Gastrocnemius medialis (tissue), 4 donors: ENCODE measurements at regions of chr4 and their contacts with region 1.

Region 1: DNA sequence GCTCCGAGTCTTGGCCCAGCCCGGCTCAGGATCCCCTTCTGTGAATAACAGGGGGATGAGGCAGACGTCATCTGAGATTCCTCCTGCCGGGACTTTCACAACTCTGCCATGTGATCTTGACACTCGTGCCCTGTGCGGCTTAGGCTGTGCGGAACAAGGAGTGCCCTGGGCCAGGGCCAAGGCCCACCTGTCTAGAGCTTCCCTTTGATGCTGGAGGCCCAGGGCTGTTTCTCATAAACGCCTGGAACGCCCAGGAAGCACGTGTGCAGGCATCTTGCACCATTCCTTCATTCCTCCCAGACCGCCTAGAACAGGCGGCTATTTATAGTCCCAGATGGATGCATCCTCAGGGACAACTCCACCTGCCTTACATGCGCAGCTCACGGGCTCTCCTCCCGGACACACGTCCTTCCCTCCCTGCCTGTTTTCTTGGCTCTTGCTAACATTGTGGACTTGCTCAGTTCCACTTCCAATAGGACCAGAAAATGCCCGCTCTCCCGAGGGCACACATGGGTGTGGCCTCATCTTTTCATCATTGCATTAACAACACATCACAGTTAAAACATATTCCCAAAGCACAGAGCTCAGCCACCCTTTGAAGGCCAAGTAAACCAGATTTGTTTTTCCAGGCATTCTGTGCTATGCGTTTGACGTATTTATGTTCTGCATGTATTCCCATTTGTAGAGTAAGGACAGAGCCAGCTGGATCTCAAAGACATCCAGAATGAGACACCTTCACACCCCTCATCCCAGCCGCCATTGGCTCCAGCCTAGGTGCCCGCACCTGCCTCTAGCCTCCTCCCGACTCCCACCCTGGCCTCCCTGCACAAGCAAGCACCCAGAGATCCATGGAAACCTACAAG is 57.2 kb downstream of the ABLIM2 start:
- DNase-seq: peak; percentile 99 to 100
- ATAC-seq: peak; percentile 57 to 62
- H3K4me3 ChIP-seq: no peak overlapping the region
- H3K27ac ChIP-seq: peak overlapping the region; percentile 93 to 100 (median 98)
- H3K4me1 ChIP-seq: peaks cover 69 to 74% of the 10 kb centered on the region in 2 donors
- H3K27me3 ChIP-seq: no peaks in the 10 kb centered on the region
- CTCF ChIP-seq: peak in 2 of 5 experiments; percentile 12 to 64
- POLR2A ChIP-seq: peak in 1 of 2 donors; percentile 69

Region 2: DNA sequence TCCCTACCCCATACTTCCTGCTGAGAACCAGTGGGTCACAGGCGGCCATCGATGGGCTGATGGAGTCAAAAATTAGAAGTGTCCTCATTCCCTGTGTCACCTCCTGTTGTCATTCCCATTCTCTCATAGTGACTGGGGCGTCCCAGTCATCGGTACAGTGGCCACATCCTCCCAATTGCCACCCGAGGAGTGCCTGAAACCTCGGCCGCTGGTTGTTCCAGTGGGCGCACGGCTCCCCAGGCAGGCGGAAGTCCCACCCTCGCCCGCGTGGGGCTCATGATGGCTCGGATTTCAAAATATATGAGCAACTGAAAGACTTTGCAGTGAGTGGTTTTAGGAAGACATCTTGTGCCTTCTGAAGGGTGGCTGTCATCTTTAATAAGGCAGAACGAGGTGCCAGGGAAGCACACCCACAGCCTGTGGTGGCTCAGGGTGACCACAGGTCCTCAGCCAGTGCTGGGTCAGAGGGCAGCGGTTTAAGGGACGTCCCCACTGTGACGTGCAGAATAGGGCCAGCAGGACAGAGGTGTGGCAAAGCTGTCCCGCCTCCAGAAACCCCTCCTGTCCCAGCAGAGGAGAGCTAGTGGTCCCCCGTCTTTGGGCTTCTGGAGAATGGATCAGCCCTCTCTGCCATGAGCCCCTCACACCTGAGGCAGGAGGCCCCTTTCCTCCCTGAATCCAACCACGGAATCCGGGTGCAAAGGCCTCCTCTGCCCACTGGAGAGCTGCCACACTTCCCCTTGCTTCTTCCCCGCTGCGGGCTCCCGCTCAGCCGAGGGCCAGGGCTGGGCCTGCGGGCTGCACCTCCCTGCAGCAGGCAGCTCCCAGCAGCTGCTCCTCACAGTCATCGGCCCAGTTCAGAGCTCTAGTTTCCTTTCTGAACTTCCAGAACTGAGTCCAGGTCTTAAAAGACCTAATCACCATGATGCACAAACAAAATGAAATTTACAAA is 33.2 kb before region 1 on chr4:
- in situ Hi-C with region 1: no loop called
- intact Hi-C with region 1: loop called (anchors 2 kb)
- DNase-seq: peak; percentile 45 to 78
- ATAC-seq: peak; percentile 59 to 63
- H3K4me3 ChIP-seq: no peak overlapping the region
- H3K27ac ChIP-seq: peak overlapping the region; percentile 89 to 95 (median 92)
- H3K4me1 ChIP-seq: peaks cover 29 to 37% of the 10 kb centered on the region in 2 donors
- H3K27me3 ChIP-seq: no peaks in the 10 kb centered on the region
- CTCF ChIP-seq: no peak
- POLR2A ChIP-seq: peak; percentile 23 to 56

Region 3: GRCh38 chr4:8113611-8114377 is 12.3 kb after region 1 on chr4:
- in situ Hi-C with region 1: no loop called
- intact Hi-C with region 1: loop called (anchors 1 kb)
- DNase-seq: peak; percentile 79 to 91
- ATAC-seq: peak; percentile 52 to 57
- H3K4me3 ChIP-seq: peak overlapping the region in 3 of 4 donors; percentile 20 to 40 (median 32)
- H3K27ac ChIP-seq: peak overlapping the region; percentile 93 to 100 (median 98)
- H3K4me1 ChIP-seq: peaks cover 89 to 91% of the 10 kb centered on the region in 2 donors
- H3K27me3 ChIP-seq: no peaks in the 10 kb centered on the region
- CTCF ChIP-seq: no peak
- POLR2A ChIP-seq: peak; percentile 60 to 67

Region 4: GRCh38 chr4:8128100-8128856 is 26.8 kb after region 1 on chr4:
- in situ Hi-C with region 1: no loop called
- intact Hi-C with region 1: no loop called
- DNase-seq: peak in 1 of 2 donors; percentile 61
- ATAC-seq: peak; percentile 4 to 13
- H3K4me3 ChIP-seq: peak overlapping the region in 3 of 4 donors; percentile 32 to 78 (median 67)
- H3K27ac ChIP-seq: peak overlapping the region; percentile 93 to 100 (median 98)
- H3K4me1 ChIP-seq: peaks cover 36 to 43% of the 10 kb centered on the region in 2 donors
- H3K27me3 ChIP-seq: no peaks in the 10 kb centered on the region
- CTCF ChIP-seq: no peak
- POLR2A ChIP-seq: peak in 1 of 2 donors; percentile 6

Region 5: DNA sequence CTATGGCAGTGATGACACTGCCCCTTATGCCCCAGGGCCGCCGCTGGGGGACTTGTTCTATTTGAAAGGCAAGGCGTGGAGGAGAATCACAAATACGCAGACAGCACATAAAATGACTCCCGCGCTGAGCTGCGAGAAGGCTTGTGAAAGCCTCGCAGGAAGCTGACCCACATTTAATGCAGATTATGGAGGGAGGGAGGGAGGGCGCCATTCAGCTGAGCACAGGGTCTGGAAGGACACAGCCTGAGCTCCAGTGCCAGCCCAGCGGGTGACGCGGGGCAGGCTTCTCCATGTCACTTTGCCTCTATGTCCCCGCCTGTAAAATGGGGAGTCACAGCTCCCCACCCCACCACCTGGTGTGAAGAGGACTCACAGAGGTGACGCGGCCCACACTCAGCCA is 42.9 kb after region 1 on chr4:
- in situ Hi-C with region 1: no loop called
- intact Hi-C with region 1: loop called (anchors 1 kb)
- DNase-seq: peak; percentile 75 to 89
- ATAC-seq: peak; percentile 40 to 58
- H3K4me3 ChIP-seq: peak overlapping the region; percentile 2 to 30 (median 21)
- H3K27ac ChIP-seq: peak overlapping the region; percentile 94 to 99 (median 96)
- H3K4me1 ChIP-seq: peaks cover 52 to 63% of the 10 kb centered on the region in 2 donors
- H3K27me3 ChIP-seq: no peaks in the 10 kb centered on the region
- CTCF ChIP-seq: peak in 1 of 5 experiments; percentile 23
- POLR2A ChIP-seq: peak; percentile 61 to 78

Region 6: DNA sequence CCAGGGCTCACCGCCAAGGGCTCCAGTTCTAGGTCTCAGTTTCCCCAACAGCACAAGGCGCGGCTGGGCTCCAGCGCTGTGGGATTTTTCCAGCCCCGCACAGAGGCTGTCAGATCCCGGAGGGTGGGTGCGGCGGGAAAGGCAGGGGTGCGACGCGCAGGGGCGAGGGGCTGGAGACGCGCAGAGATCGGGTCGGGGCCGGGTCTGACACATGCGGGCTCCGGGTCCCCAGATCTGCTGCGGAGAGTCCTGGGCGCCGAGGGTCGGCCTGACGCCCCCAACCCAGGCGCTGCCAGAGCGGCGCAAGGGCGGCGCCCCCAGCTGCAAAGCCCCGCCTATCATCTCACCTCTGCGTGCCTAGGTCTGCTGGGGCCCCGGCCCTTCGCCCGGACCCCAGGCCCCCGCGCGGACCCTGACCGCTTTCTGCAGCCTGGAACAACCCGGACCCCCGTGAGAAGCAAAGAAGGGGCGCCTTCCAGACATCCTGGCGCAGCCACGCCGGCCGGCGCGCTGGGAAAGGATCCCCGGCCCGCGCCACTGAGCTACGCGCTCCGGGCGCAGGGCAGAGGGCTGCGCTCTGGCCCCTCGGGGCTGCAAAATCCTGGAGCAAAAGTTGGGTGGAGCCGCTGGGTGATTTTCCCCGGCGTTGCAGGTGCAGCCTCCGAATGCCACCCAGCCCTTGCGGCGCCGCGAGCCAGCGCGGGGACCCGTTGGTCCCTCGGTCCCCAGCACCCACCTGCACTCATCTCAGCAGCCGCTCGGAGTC is 56.7 kb after region 1 on chr4:
- in situ Hi-C with region 1: loop called in 3 of 4 experiments (anchors 10 kb)
- intact Hi-C with region 1: loop called (anchors 2 kb)
- DNase-seq: no peak
- ATAC-seq: peak; percentile 12 to 14
- H3K4me3 ChIP-seq: peak overlapping the region; percentile 80 to 93 (median 90)
- H3K27ac ChIP-seq: peak overlapping the region; percentile 89 to 99 (median 92)
- H3K4me1 ChIP-seq: peaks cover 44 to 49% of the 10 kb centered on the region in 2 donors
- H3K27me3 ChIP-seq: no peaks in the 10 kb centered on the region
- CTCF ChIP-seq: no peak
- POLR2A ChIP-seq: no peak

Region 7: GRCh38 chr4:8168232-8168631 is 66.8 kb after region 1 on chr4:
- in situ Hi-C with region 1: loop called (anchors 5 to 10 kb)
- intact Hi-C with region 1: loop called (anchors 1 kb)
- DNase-seq: no peak
- ATAC-seq: no peak
- H3K4me3 ChIP-seq: no peak overlapping the region
- H3K27ac ChIP-seq: peak overlapping the region; percentile 86 to 99 (median 97)
- H3K4me1 ChIP-seq: peaks cover 47 to 50% of the 10 kb centered on the region in 2 donors
- H3K27me3 ChIP-seq: no peaks in the 10 kb centered on the region
- CTCF ChIP-seq: peak in 3 of 5 experiments; percentile 47 to 79 (median 79)
- POLR2A ChIP-seq: no peak

Region 8: DNA sequence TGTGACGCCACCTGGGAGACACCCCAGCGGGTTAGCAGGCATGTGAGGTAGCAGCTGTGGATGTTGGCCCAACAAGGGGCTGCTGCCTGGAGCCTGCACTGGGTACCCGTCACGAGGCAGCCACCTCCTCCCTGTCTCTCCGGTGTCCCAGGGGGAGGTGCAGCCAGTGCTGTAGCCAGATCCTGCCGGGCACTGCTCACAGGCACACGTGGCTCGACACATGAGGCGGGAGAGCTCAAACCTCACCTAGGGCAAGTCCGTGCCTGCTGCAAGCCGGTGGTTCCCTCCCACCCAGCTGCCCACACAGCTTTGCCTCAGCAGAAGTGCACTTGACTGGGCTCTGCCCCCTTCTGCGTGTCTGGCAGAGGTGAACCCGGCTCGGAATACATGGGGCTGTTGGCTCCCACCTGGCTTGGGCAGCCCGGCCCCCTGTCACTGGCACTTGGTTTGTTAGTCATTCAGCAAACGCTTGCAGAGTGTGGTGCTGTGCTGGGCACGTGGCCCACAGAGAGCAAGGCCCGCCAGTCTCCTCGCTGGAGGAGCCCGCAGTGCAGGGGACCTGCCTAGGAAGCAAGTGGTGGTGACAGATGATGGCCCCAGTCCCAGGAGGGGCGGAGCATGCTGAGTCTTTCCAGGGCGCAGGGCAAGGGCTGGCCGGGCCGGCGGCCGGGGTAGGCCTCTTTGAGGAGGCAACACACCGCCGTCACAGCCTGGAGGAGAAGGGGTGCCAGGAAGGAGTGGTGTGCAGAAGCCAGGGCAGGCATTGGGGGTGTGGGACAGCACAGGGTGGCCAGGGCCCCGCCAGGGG is 87.5 kb after region 1 on chr4:
- in situ Hi-C with region 1: no loop called
- intact Hi-C with region 1: loop called (anchors 1 kb)
- DNase-seq: peak; percentile 88 to 95
- ATAC-seq: peak; percentile 61 to 62
- H3K4me3 ChIP-seq: peak overlapping the region in 1 of 4 donors; percentile 19
- H3K27ac ChIP-seq: peak overlapping the region; percentile 89 to 94 (median 92)
- H3K4me1 ChIP-seq: peaks cover 41 to 47% of the 10 kb centered on the region in 2 donors
- H3K27me3 ChIP-seq: no peaks in the 10 kb centered on the region
- CTCF ChIP-seq: no peak
- POLR2A ChIP-seq: peak; percentile 49 to 64